Posterior vena cava (tissue), 2 donors: ENCODE measurements at regions of chr3 and their contacts with region 1.

Region 1: DNA sequence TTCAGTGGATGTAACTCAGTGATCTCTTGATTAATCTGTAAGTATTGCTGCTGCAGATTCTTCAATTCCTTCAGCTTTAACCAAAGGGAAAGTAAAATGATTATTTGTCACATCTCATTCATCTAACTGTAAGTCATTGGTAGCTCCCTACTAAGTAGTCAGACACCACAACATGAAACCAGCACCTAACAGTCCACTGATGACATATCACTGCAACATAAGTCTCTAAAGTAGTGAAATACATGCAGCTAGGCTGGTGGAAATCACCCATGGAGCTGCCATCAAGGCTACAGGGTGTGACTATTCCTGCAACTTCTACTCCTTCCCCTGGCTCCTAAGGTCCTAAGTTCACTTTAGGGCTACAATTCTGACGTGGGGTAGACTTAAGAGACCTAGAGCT is 21.1 kb upstream of the HCLS1 start:
- DNase-seq: no peak

Region 2: DNA sequence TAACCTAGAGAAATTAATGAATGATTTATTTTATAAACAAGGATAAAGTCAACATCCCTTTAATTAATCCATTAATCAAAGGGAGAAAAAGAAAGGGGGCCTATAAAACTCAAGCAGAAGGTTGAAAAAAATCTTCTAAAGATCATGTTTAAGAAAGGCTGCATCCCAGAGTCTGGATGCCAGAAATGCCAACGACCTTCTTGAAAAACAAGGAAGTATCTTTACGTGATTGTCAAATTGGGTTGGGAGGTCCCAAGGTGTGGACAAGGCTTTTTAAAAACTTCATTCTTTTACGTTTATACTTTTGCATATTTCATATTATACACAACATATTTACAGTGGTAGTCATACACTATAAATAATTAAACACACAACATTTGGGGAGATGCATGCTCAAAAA is 66.2 kb after region 1 on chr3:
- intact Hi-C with region 1: loop called in 1 of 2 experiments (anchors 2 kb)
- DNase-seq: no peak

Region 3: GRCh38 chr3:121979734-121980449 is 298.1 kb after region 1 on chr3:
- intact Hi-C with region 1: no loop called
- DNase-seq: no peak